ENCODE measurements at regions of chr17 and their contacts with region 1.

Region 1: DNA sequence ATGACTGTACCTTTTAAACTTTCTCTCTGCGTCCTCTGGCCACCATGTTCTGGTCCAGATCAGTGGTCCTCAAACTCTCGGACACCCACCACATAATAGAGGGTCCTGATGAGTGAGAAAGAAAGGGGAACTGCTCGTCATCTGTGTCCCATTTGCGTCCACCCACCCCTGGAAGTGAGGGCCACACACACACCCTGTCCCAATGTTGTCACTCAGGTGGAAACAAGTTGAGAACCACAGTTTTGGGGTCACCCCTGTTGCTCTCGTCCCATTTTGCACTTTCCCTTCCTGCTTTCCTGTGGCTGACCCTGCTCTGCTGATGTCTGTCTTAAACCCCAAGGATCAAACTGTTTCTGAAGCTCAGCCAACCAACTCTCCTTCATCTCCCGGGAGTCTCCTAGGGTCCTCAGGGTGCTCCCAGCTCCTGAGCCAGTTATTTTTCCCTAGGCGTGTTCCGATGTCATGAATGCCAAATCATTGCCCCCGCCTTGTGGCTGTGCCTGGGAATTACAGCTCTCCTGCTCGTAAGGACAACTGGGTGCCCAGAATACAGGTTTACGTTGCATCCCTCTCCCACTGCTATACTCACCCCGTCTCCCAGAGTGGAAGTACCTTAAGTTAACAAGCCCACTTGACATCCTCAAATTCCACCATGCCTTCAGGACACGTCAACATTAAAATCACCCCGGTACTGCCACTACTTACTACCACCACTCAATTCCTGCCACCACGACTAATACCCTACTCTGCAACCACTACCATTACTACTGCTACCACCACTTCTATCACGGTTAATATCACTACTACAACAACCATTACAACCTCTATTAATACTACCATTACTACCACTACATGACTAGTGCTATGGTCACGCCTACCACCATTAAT is 26.0 kb upstream of the HNF1B start:
- DNase-seq: no peak
- ATAC-seq: 0 out of 3 replicates have a peak, but pooled peaks have one; percentile 5
- H3K4me3 ChIP-seq: no peak overlapping the region
- H3K27ac ChIP-seq: no peak overlapping the region
- H3K4me1 ChIP-seq: peaks cover 55% of the 10 kb centered on the region
- H3K27me3 ChIP-seq: no peaks in the 10 kb centered on the region
- CTCF ChIP-seq: peak; percentile 63 to 79 (median 74)
- EP300 ChIP-seq: no peak; a peak in 1 of 4 replicates
- POLR2A ChIP-seq: no peak
- RAD21 ChIP-seq: peak; percentile 55

Region 2: DNA sequence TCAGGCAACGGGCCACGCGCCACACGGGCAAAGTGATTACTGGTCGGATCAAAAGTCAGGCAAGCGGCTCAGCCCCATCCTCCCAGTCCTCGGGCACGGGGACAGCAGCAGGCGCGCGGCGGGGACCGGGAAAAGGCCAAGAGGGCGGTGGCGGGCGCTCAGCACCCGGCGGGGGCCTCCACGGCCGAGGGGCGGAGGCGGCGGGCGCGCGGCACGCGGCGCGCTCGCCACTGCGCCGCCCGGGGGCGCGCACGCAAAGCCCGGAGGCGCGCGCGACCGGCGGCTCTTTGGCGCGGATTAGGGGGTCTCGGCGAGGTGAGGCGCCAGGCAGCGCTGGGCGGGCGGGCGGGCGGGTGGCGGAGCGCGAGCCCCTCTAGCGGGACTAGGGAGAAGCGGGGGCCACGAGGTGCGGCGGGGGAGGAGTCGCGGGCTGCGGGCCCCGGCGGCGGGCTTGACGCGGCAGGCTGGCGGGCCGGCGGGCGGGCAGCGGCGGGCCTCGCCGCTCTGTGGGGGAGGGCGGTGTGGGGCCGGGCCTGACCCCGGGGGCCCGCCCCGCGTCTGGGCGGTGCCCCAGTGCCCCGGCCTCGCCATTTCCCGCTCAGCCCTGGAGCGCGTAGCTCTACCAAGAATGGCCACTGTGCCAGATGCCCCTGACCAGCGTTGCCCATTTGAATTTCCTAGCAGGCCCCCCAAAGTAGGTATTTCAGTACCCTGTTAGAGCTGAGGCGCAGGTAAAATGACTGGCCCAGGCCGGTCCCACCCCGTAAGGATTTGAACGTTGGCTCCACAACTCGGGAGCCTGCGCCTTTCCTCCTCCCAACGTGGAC is 364.0 kb before region 1 on chr17 and contains the starts of genes ACACA and TADA2A:
- CTCF ChIA-PET with region 1: no interaction called
- POLR2A ChIA-PET with region 1: no interaction called
- RAD21 ChIA-PET with region 1: no interaction called
- SMC1A ChIA-PET with region 1: no interaction called
- in situ Hi-C with region 1: no loop called
- intact Hi-C with region 1: no loop called
- DNase-seq: no peak
- ATAC-seq: peak; percentile 95
- H3K4me3 ChIP-seq: peak within 1 kb of the TSS; percentile 96
- H3K27ac ChIP-seq: peak within 1 kb of the TSS; percentile 95
- H3K4me1 ChIP-seq: peaks cover 21% of the 10 kb centered on the region
- H3K27me3 ChIP-seq: no peaks in the 10 kb centered on the region
- CTCF ChIP-seq: no peak
- EP300 ChIP-seq: no peak
- POLR2A ChIP-seq: peak; percentile 84
- RAD21 ChIP-seq: no peak
- polyA plus RNA-seq, gene ACACA: 12.9 to 14.7 TPM
- polyA plus RNA-seq, gene TADA2A: 39.9 to 43.8 TPM

Region 3: DNA sequence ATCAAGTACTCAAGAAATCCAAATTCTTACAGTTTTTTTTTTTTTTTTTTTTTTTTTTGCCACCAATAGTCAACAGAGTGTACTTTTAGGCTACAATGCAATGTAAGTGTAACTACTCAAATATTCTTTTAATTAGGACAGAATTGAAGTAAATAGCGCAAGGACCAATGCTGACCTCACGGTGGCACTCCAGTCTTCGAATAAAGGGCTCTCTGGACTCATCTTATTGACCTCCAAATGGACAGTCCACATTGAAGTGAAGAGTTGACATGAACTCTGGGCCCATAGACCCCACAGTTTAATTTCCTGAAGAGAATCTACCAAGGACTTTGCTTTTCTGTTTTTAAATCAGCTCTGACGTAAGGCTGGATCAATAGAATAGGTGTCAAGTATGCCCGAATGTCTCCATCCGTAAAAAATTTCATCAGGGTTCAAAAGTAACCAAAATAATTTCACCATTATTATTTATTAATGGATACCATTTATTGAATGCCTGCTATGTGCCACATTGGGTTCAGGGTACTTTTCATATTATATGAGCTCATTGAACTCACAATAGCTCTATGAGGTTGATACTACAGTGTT is 120.4 kb before region 1 on chr17:
- CTCF ChIA-PET with region 1: interaction called, 13 read pairs
- POLR2A ChIA-PET with region 1: no interaction called
- RAD21 ChIA-PET with region 1: interaction called, 6 read pairs
- SMC1A ChIA-PET with region 1: interaction called, 13 read pairs
- in situ Hi-C with region 1: no loop called
- intact Hi-C with region 1: no loop called
- DNase-seq: no peak
- ATAC-seq: peak; percentile 52
- H3K4me3 ChIP-seq: no peak overlapping the region
- H3K27ac ChIP-seq: no peak overlapping the region
- H3K4me1 ChIP-seq: no peaks in the 10 kb centered on the region
- H3K27me3 ChIP-seq: no peaks in the 10 kb centered on the region
- CTCF ChIP-seq: peak; percentile 27 to 47 (median 32); a peak in 5 of 6 replicates
- EP300 ChIP-seq: no peak
- POLR2A ChIP-seq: no peak
- RAD21 ChIP-seq: peak; percentile 47

Region 4: DNA sequence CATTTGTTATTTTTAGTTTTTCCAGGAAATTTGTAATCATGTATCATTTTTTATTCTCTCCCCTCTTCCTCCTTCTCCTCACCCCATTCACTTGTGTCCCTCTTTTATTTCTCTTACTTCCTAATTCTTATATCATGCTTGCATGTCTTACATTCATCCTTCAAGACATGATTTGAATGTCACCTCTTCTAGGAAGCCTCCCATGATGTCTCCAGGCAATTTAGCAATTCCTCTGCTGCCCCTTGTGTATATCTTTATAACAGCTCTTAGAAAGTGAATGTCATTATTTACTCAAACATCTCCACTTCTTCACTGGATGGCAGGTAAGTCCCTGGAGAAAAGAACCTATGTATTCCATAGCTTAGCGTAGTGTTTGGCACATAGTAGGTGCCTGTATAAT is 33.8 kb before region 1 on chr17:
- CTCF ChIA-PET with region 1: interaction called, 16 read pairs
- POLR2A ChIA-PET with region 1: interaction called, 6 read pairs
- RAD21 ChIA-PET with region 1: interaction called, 26 read pairs
- SMC1A ChIA-PET with region 1: interaction called, 22 read pairs
- in situ Hi-C with region 1: no loop called
- intact Hi-C with region 1: no loop called
- DNase-seq: no peak
- ATAC-seq: peak; percentile 41
- H3K4me3 ChIP-seq: no peak overlapping the region
- H3K27ac ChIP-seq: no peak overlapping the region
- H3K4me1 ChIP-seq: 0 out of 2 replicates have a peak, but pooled peaks cover 3% of the 10 kb centered on the region
- H3K27me3 ChIP-seq: peaks cover 0 to 8% of the 10 kb centered on the region in 2 experiments; a peak in 2 of 4 replicates
- CTCF ChIP-seq: peak in 2 of 3 experiments; percentile 14 to 19; a peak in 1 of 6 replicates
- EP300 ChIP-seq: no peak
- POLR2A ChIP-seq: no peak
- RAD21 ChIP-seq: 0 out of 2 replicates have a peak, but pooled peaks have one; percentile 22

Region 5: DNA sequence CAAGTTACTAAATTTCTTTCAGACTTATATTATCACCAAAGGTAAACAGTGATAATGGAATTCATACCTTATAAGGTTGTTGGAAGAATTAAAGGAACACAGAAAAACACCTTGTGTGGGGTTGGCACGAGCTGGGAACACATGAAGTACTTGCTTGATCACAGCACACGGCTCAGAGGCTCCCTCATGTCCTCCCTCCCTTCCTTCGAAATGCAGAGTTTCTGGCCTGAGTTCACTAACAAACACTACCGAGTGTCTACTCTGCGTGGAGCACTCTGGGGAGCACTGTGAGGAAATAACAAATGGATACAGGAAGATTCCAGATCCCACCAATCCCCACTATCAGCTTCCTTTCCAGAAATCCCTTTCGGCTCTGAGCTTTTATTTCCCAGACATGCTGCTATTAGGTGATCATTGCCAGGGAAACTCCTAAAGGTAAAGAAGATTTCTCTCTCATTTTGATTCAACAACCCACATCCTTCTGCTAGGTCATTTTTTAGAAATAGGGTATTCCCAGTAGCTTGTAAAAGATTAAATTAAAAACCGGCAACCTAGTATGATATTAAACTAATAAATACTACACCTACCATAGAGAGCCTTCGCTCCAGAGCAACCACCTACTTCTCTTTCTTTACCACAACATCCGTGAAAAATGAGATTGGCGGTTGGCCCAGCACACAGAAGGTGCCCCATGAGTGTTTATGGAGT is 20.0 kb before region 1 on chr17:
- CTCF ChIA-PET with region 1: interaction called, 58 read pairs
- POLR2A ChIA-PET with region 1: interaction called, 44 read pairs
- RAD21 ChIA-PET with region 1: interaction called, 41 read pairs
- SMC1A ChIA-PET with region 1: interaction called, 167 read pairs
- in situ Hi-C with region 1: no loop called
- intact Hi-C with region 1: no loop called
- DNase-seq: no peak
- ATAC-seq: peak; percentile 75
- H3K4me3 ChIP-seq: no peak overlapping the region
- H3K27ac ChIP-seq: no peak overlapping the region
- H3K4me1 ChIP-seq: peaks cover 21% of the 10 kb centered on the region
- H3K27me3 ChIP-seq: no peaks in the 10 kb centered on the region
- CTCF ChIP-seq: no peak
- EP300 ChIP-seq: peak in 1 of 2 experiments; percentile 54; a peak in 1 of 4 replicates
- POLR2A ChIP-seq: no peak
- RAD21 ChIP-seq: no peak

Region 6: DNA sequence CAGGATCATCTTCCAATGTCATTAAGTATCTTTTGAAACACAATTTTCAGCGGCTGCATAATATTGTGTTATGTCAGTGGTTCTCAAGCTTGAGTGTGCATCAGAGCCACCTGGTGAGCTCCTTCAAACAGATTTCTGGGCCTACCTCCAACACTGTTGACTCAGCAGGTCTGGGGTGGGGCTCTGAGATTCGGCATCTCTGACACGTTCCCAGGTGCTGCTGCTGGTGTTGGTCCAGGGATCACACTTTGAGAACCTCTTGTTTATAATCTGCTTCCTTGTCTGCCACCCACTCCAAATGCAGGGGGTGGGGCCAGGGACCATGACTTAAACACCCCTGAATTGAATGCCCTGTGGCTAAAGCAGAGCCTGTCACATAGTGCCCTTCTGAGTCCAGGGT is 47.8 kb after region 1 on chr17:
- CTCF ChIA-PET with region 1: interaction called, 19 read pairs
- POLR2A ChIA-PET with region 1: no interaction called
- RAD21 ChIA-PET with region 1: interaction called, 10 read pairs
- SMC1A ChIA-PET with region 1: interaction called, 35 read pairs
- in situ Hi-C with region 1: no loop called
- intact Hi-C with region 1: no loop called
- DNase-seq: no peak
- ATAC-seq: no peak
- H3K4me3 ChIP-seq: no peak overlapping the region
- H3K27ac ChIP-seq: peak overlapping the region; percentile 30; the same call in 1 of the 2 replicates
- H3K4me1 ChIP-seq: peaks cover 30% of the 10 kb centered on the region
- H3K27me3 ChIP-seq: no peaks in the 10 kb centered on the region
- CTCF ChIP-seq: no peak
- EP300 ChIP-seq: no peak
- POLR2A ChIP-seq: no peak
- RAD21 ChIP-seq: no peak

Measured in GM12878 (cell line).